PC-9 (cell line): ENCODE measurements at regions of chr10 and their contacts with region 1.

Region 1: GRCh38 chr10:43265799-43266721 is 805 bp downstream of the RASGEF1A start:
- DNase-seq: peak; percentile 48 to 66
- H3K4me3 ChIP-seq: peak overlapping the region; percentile 30; the same call in 1 of the 2 replicates
- H3K27ac ChIP-seq: no peak overlapping the region
- H3K4me1 ChIP-seq: no peaks in the 10 kb centered on the region
- H3K27me3 ChIP-seq: peaks cover 76% of the 10 kb centered on the region
- CTCF ChIP-seq: peak; percentile 71

Region 2: GRCh38 chr10:42367532-42368230 is 898.4 kb before region 1 on chr10:
- CTCF ChIA-PET with region 1: no interaction called
- POLR2A ChIA-PET with region 1: interaction called, 13 read pairs
- intact Hi-C with region 1: no loop called
- DNase-seq: peak; percentile 88 to 91
- H3K4me3 ChIP-seq: peak overlapping the region; percentile 89
- H3K27ac ChIP-seq: no peak overlapping the region
- H3K4me1 ChIP-seq: no peaks in the 10 kb centered on the region; the same call in 1 of the 2 replicates
- H3K27me3 ChIP-seq: no peaks in the 10 kb centered on the region
- CTCF ChIP-seq: no peak

Region 3: GRCh38 chr10:43229208-43230061 is 36.6 kb before region 1 on chr10:
- CTCF ChIA-PET with region 1: no interaction called
- POLR2A ChIA-PET with region 1: no interaction called
- intact Hi-C with region 1: no loop called
- DNase-seq: peak in 1 of 2 experiments; percentile 47
- H3K4me3 ChIP-seq: peak overlapping the region; percentile 18; the same call in 1 of the 2 replicates
- H3K27ac ChIP-seq: no peak overlapping the region
- H3K4me1 ChIP-seq: no peaks in the 10 kb centered on the region
- H3K27me3 ChIP-seq: peaks cover 15% of the 10 kb centered on the region
- CTCF ChIP-seq: no peak